Colonic mucosa (tissue), 4 donors: ENCODE measurements at regions of chr13 and their contacts with region 1.

Region 1: DNA sequence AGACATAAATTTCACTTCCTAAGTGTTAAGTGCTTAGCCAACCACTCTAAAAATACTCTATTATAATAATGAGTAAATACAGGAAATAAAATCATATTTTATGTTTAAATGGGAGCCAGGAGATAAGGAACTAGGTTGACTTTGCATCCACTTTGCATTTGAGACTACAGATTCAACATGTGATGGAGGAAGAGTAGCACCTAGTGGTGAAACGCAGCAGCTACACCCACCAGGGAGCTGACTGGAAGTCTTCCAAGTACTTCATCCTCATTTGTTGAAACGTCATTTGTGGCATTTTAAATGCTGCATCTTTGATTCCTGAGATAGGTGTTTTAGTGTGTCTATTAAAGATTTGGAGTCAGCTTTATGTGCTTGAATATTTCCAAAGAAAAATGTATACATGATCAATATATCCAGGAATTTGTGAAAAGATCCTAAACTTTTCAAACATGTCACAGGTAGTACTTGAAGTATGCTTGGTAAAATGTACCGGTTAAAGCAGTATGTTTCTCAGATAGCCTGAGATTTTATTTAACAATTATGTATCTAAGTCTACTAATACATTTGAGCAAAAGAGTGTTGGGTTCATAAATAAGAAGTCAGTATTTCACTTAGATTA is 17.4 kb upstream of the KCTD12 start:
- DNase-seq: peak; percentile 57
- H3K4me3 ChIP-seq: no peak overlapping the region
- H3K27ac ChIP-seq: no peak overlapping the region
- H3K4me1 ChIP-seq: no peaks in the 10 kb centered on the region
- H3K27me3 ChIP-seq: no peaks in the 10 kb centered on the region
- CTCF ChIP-seq: peak; percentile 95

Region 2: GRCh38 chr13:75518439-75519088 is 1385.1 kb before region 1 on chr13:
- intact Hi-C with region 1: no loop called
- DNase-seq: no peak
- H3K4me3 ChIP-seq: no peak overlapping the region
- H3K27ac ChIP-seq: no peak overlapping the region
- H3K4me1 ChIP-seq: no peaks in the 10 kb centered on the region
- H3K27me3 ChIP-seq: no peaks in the 10 kb centered on the region
- CTCF ChIP-seq: no peak

Region 3: GRCh38 chr13:75687150-75687763 is 1216.4 kb before region 1 on chr13:
- intact Hi-C with region 1: loop called (anchors 10 kb)
- DNase-seq: no peak
- H3K4me3 ChIP-seq: no peak overlapping the region
- H3K27ac ChIP-seq: no peak overlapping the region
- H3K4me1 ChIP-seq: no peaks in the 10 kb centered on the region
- H3K27me3 ChIP-seq: no peaks in the 10 kb centered on the region
- CTCF ChIP-seq: peak; percentile 45

Region 4: GRCh38 chr13:75876360-75877050 is 1027.1 kb before region 1 on chr13:
- intact Hi-C with region 1: loop called (anchors 5 kb)
- DNase-seq: peak; percentile 57
- H3K4me3 ChIP-seq: no peak overlapping the region
- H3K27ac ChIP-seq: no peak overlapping the region
- H3K4me1 ChIP-seq: no peaks in the 10 kb centered on the region
- H3K27me3 ChIP-seq: no peaks in the 10 kb centered on the region
- CTCF ChIP-seq: peak; percentile 86

Region 5: GRCh38 chr13:76473552-76474134 is 430.0 kb before region 1 on chr13:
- intact Hi-C with region 1: loop called (anchors 5 kb)
- DNase-seq: peak; percentile 75
- H3K4me3 ChIP-seq: no peak overlapping the region
- H3K27ac ChIP-seq: no peak overlapping the region
- H3K4me1 ChIP-seq: no peaks in the 10 kb centered on the region
- H3K27me3 ChIP-seq: no peaks in the 10 kb centered on the region
- CTCF ChIP-seq: peak; percentile 87

Region 6: GRCh38 chr13:76667551-76667950 is 236.1 kb before region 1 on chr13:
- intact Hi-C with region 1: loop called (anchors 5 kb)
- DNase-seq: peak; percentile 21
- H3K4me3 ChIP-seq: no peak overlapping the region
- H3K27ac ChIP-seq: no peak overlapping the region
- H3K4me1 ChIP-seq: no peaks in the 10 kb centered on the region
- H3K27me3 ChIP-seq: no peaks in the 10 kb centered on the region
- CTCF ChIP-seq: no peak

Region 7: DNA sequence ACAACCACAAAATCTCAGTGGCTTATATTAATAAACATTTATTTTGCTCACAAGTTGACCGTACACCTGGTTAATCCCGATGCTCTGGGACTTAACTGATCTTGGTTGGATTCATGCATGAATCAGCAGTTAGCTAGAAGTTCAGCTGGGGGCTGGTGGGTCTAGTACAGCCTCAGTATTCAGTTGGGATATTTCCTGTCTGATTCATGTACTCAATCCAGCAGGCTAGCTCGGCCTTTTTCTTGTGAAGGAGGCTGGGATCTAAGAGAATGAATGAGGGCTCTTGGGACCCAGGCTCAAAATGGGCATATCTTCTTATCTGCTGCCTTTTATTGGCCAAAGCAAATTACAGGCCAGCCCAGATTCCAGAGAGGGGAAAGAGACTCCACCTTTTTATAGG is 196.3 kb before region 1 on chr13:
- intact Hi-C with region 1: no loop called
- DNase-seq: no peak
- H3K4me3 ChIP-seq: no peak overlapping the region
- H3K27ac ChIP-seq: no peak overlapping the region
- H3K4me1 ChIP-seq: no peaks in the 10 kb centered on the region
- H3K27me3 ChIP-seq: no peaks in the 10 kb centered on the region
- CTCF ChIP-seq: no peak

Region 8: GRCh38 chr13:76822698-76823267 is 80.9 kb before region 1 on chr13:
- intact Hi-C with region 1: loop called (anchors 5 kb)
- DNase-seq: no peak
- H3K4me3 ChIP-seq: no peak overlapping the region
- H3K27ac ChIP-seq: no peak overlapping the region
- H3K4me1 ChIP-seq: no peaks in the 10 kb centered on the region
- H3K27me3 ChIP-seq: no peaks in the 10 kb centered on the region
- CTCF ChIP-seq: peak; percentile 24